AG04449 (cell line): ENCODE measurements at regions of chr10 and their contacts with region 1.

Region 1: GRCh38 chr10:1036341-1036791 is 10.7 kb upstream of the IDI2 start:
- DNase-seq: no peak
- H3K4me3 ChIP-seq: no peak overlapping the region
- CTCF ChIP-seq: no peak

Region 2: DNA sequence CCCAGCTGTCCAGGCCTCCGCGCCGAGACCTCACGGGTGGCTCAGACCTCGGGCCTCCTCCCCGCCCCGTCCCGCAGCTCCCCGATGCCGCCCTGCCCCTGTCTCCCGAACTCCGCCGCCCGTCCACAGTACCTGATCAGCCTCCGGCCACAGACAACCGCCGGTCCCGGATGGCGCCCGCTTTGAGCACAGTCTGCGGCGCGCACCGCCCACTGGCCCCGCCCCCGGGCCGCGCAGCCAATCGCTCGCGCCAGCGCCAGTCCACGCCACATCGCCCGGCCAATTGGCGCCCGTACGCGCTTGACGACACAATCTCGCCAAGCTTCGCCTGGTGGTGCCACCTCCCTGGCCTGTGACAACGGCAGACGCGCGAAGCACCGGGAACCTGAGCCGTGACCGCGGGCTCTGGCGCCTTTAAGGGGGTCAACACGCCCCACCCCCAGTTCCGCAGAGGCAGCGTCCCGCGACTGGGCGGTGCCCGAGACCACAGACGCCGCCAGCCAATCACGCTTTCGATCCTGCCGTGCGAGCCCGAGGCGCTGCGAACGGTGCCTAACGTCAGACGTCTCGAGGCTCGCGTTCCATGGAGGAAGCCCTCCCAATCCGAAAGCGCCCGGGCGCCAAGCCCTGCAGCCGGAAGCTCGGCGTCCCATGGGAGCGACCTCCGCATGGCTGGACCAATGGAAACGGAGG is 12.5 kb after region 1 on chr10 and contains the start of gene IDI1:
- CTCF ChIA-PET with region 1: interaction called, 4 read pairs
- POLR2A ChIA-PET with region 1: interaction called, 17 read pairs
- DNase-seq: peak; percentile 89
- H3K4me3 ChIP-seq: peak within 1 kb of the TSS; percentile 95
- CTCF ChIP-seq: no peak